ENCODE measurements at regions of chr10 and their contacts with region 1.

Region 1: GRCh38 chr10:3811291-3811870 is 26.4 kb upstream of the KLF6 start:
- DNase-seq: peak; percentile 82
- H3K4me3 Mint-ChIP-seq: peak overlapping the region; percentile 52
- H3K27ac Mint-ChIP-seq: peak overlapping the region; percentile 96
- H3K4me1 Mint-ChIP-seq: peaks cover 76% of the 10 kb centered on the region
- H3K27me3 Mint-ChIP-seq: no peaks in the 10 kb centered on the region

Region 2: GRCh38 chr10:3652886-3653285 is 158.5 kb before region 1 on chr10:
- CTCF ChIA-PET with region 1: no interaction called
- intact Hi-C with region 1: no loop called
- DNase-seq: peak; percentile 55
- H3K4me3 Mint-ChIP-seq: peak overlapping the region; percentile 62
- H3K27ac Mint-ChIP-seq: no peak overlapping the region
- H3K4me1 Mint-ChIP-seq: peaks cover 21% of the 10 kb centered on the region
- H3K27me3 Mint-ChIP-seq: peaks cover 5% of the 10 kb centered on the region

Region 3: DNA sequence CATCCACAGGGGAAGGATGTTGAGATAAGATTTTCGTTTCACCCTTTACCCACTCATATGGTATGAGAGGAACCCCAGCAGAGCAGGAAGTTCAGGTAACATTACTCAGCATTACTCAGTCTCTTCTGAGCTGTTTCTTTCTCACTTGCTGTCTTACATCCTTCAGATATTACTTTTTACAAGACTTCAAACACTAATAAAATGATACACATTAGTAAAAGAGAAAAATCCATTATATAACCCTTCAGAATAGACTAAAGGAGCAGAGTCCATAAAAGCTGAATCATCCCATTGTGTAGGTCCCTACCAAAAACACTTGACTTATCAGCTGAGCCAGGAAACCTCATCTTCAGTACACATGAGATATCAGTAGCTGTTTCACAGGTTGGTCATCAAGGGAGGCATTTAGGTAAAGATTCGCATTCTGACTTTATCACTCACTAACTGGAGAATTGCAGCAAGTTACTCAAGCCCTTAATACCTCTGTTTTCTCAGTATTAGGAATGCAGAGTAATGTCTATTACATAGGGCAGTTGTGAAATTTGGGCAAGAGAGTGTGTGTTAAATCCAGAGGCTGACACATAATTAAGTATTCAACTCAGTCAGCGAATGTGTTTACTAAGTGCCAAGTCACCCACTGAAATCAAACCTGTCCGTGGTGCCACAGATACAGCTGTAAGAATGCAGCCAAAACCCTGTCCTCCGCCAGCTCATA is 71.1 kb before region 1 on chr10:
- CTCF ChIA-PET with region 1: no interaction called
- intact Hi-C with region 1: loop called (anchors 1 kb)
- DNase-seq: no peak
- H3K4me3 Mint-ChIP-seq: no peak overlapping the region
- H3K27ac Mint-ChIP-seq: peak overlapping the region; percentile 59
- H3K4me1 Mint-ChIP-seq: peaks cover 31% of the 10 kb centered on the region
- H3K27me3 Mint-ChIP-seq: no peaks in the 10 kb centered on the region

Region 4: DNA sequence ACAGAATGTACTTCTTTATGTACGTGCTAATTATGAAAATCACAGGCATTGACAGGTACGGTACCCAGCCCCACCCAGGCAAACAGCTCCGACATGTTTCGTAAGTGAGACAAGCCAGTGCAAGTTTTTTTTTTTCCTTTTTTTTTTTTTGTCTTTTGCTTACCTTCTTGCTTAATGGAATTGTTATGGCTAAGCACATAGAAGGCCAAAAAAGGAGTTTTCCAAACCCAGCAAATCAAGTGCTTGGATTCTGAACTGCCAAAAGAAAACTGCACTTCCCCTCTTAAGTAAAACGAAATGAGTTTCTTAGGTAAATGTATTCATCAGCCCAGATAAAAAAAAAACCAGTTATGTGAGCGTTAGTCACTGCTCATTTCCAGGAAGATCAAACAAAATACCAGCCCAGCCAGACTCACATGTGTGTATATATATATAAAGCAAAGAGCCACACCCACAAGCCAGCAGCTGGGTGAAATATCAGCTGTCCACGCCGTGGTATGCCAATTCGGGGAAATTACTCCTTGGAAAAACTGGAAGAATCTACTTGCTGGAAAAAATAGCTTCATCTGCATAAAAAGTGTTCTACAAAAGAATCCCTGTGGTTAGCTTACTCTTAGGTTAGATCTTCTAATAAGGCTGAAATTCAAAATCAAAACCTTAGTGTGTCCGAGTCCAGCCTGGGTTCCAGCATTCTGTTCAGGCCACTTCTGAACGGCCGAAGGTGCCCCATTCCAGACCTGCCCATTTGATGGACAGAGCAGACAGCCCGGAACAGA is 34.4 kb before region 1 on chr10:
- CTCF ChIA-PET with region 1: interaction called, 3 read pairs
- intact Hi-C with region 1: loop called (anchors 1 kb)
- DNase-seq: peak; percentile 70
- H3K4me3 Mint-ChIP-seq: peak overlapping the region; percentile 53
- H3K27ac Mint-ChIP-seq: peak overlapping the region; percentile 90
- H3K4me1 Mint-ChIP-seq: peaks cover 65% of the 10 kb centered on the region
- H3K27me3 Mint-ChIP-seq: no peaks in the 10 kb centered on the region

Region 5: DNA sequence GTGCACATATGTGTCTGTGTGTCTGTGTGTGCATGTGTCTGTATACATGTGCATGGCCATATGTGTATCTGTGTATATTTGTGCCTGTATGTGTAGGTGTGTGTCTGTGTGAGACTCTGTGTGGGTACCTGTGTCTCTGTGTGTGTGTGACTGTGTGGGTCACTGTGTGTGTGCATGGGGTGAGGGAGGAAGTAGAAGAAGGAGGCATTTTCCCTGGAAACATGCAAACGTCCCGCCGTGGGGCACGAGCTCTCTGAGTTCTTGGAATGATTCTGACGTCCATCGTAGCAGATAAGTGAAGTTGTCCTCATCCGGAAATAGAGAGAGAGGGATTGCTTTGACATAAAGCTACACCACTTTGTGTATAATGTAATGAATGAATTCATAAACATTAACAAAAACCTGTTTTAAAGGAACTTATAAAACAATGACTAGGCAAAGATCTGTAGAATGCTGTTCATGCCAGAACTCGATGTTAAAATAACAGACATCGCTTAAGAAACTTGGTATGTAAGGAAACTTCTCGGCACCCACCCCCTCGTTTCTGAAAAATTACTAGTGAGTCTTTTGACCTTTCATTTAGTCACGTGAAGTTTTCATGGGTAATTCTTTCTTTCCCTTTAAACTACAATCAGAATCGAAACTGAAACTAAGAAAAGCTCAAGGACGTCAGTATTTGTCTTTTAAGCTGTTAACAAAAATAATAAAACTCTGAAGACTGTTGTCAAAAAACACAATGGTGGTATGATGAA is 17.2 kb after region 1 on chr10:
- CTCF ChIA-PET with region 1: no interaction called
- intact Hi-C with region 1: loop called (anchors 1 kb)
- DNase-seq: peak; percentile 82
- H3K4me3 Mint-ChIP-seq: peak overlapping the region; percentile 52
- H3K27ac Mint-ChIP-seq: peak overlapping the region; percentile 87
- H3K4me1 Mint-ChIP-seq: peaks cover 43% of the 10 kb centered on the region
- H3K27me3 Mint-ChIP-seq: no peaks in the 10 kb centered on the region

Region 6: DNA sequence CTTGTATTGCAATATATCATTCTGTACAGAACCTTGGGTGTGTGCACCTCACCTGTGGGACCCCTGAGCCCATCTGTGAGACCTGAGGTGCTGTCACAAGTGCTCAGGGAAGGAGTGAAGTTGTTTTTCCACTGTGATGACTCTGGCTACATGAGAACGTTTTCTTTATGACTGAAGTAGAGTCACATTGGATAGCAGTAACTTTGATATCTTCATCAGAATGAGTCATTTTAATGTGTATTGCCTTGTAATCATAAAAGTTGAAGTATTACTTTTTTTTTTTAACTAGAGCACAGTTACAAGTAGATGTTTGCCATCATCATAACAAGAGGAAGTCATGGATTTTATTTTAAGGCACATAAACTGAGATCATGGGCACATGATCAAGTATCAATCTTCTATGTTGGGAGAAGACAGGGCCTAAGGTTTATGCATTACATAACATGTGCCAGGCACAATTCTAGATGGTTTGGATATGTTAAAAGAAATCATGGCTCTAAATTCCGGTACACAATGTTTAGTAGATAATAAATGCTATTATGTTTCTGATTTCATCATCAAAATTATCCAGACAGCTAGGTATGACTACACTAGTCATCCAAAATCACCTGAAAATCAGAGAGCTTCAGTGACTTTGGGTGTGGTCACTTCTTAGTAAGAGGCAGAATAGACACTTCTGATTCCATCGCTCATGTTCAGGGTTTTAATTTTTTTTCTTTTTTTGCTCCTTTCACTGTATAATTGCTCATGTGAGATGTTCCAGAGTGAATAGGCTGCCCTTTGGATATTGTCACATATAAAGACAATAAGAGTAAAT is 56.3 kb after region 1 on chr10:
- CTCF ChIA-PET with region 1: interaction called, 6 read pairs
- intact Hi-C with region 1: loop called (anchors 1 kb)
- DNase-seq: peak; percentile 46
- H3K4me3 Mint-ChIP-seq: no peak overlapping the region
- H3K27ac Mint-ChIP-seq: peak overlapping the region; percentile 70
- H3K4me1 Mint-ChIP-seq: peaks cover 53% of the 10 kb centered on the region
- H3K27me3 Mint-ChIP-seq: no peaks in the 10 kb centered on the region

Region 7: GRCh38 chr10:3873728-3874461 is 62.5 kb after region 1 on chr10:
- CTCF ChIA-PET with region 1: interaction called, 4 read pairs
- intact Hi-C with region 1: loop called (anchors 1 kb)
- DNase-seq: no peak
- H3K4me3 Mint-ChIP-seq: no peak overlapping the region
- H3K27ac Mint-ChIP-seq: peak overlapping the region; percentile 36
- H3K4me1 Mint-ChIP-seq: peaks cover 52% of the 10 kb centered on the region
- H3K27me3 Mint-ChIP-seq: no peaks in the 10 kb centered on the region

Region 8: GRCh38 chr10:3887885-3888476 is 76.6 kb after region 1 on chr10:
- CTCF ChIA-PET with region 1: no interaction called
- intact Hi-C with region 1: no loop called
- DNase-seq: peak; percentile 38
- H3K4me3 Mint-ChIP-seq: no peak overlapping the region
- H3K27ac Mint-ChIP-seq: peak overlapping the region; percentile 75
- H3K4me1 Mint-ChIP-seq: peaks cover 14% of the 10 kb centered on the region
- H3K27me3 Mint-ChIP-seq: peaks cover 5% of the 10 kb centered on the region